BJ (cell line): ENCODE measurements at regions of chrX and their contacts with region 1.

Region 1: GRCh38 chrX:48028091-48028490 is 21.3 kb downstream of the SPACA5 start:
- DNase-seq: no peak
- H3K4me3 ChIP-seq: no peak overlapping the region
- H3K27me3 ChIP-seq: no peaks in the 10 kb centered on the region
- CTCF ChIP-seq: no peak

Region 2: DNA sequence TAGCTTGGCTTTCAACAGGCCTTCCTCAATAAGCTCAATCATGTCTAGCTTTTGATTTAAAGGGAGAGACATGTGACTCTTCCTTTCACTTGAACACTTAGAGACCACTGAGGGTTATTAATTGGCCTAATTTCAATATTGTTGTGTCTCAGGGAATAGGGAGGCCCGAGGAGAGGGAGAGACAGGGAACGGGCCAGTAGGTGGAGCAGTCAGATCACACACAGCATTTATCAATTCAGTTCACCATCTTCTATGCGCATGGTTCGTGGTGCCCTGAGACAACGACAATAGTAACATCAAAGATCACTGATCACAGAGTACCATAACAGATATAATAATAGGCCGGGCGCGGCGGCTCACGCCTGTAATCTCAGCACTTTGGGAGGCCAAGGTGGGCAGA is 173.6 kb before region 1 on chrX:
- CTCF ChIA-PET with region 1: interaction called, 32 read pairs
- POLR2A ChIA-PET with region 1: no interaction called
- DNase-seq: no peak
- H3K4me3 ChIP-seq: no peak overlapping the region
- H3K27me3 ChIP-seq: no peaks in the 10 kb centered on the region
- CTCF ChIP-seq: peak; percentile 55

Region 3: GRCh38 chrX:48086082-48086481 is 58.0 kb after region 1 on chrX:
- CTCF ChIA-PET with region 1: no interaction called
- POLR2A ChIA-PET with region 1: no interaction called
- DNase-seq: no peak
- H3K4me3 ChIP-seq: no peak overlapping the region
- H3K27me3 ChIP-seq: no peaks in the 10 kb centered on the region
- CTCF ChIP-seq: no peak